ENCODE measurements at regions of chr9 and their contacts with region 1.

Region 1: DNA sequence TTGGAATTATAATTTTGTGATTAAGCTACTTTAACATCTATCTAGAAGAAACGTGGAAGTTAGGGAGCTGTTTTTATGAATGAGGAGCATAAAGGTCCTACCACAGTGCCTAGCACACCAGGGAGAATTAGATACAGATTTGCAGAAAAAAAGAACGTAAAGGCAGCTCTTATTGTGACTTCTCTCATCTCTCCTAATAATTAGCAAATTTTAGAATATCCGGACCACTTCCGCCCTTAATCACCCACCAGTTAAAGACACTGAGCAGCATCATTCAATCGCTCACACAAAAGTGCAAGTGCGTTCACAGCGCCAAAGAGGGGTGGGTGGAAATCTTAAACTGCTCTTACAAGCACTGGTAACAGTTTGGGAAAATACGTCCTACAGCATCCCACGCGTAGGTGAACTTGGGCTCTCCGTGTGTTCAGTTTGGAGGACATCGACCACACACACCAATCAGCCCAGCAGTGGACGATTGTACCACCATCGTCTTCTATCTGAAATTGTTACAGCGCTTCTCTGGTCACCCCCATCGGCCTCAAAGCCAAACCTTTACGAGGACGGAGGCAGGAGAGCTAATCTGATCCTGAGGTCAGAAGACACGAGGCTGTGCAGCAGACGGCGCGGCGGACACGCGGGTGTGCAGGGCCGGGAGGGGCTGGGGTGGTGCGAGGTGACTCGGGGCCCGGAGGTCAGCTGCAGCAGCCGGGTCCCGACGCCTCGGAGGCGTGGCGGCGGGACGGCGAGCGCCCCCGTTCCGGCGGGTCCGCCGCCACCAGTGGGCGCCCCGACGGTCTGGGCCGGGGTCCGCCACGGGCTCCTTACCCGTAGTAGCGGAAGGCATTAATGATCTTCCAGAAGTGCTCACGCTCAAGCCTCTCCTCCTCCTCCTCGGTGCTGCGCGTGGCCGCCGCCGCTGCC is 646 bp downstream of the CARNMT1 start:
- DNase-seq: peak in 8 of 10 donors; percentile 1 to 69 (median 28)
- ATAC-seq: peak; percentile 4 to 31
- H3K4me3 Mint-ChIP-seq: peak overlapping the region; percentile 88 to 98 (median 96)
- H3K27ac Mint-ChIP-seq: peak overlapping the region; percentile 83 to 98 (median 95)
- H3K4me1 Mint-ChIP-seq: peaks cover 16 to 49% (median 43%) of the 10 kb centered on the region in 4 donors
- H3K27me3 Mint-ChIP-seq: no peaks in the 10 kb centered on the region

Region 2: GRCh38 chr9:74940600-74940999 is 86.8 kb before region 1 on chr9:
- POLR2A ChIA-PET with region 1: no interaction called
- DNase-seq: no peak
- ATAC-seq: no peak
- H3K4me3 Mint-ChIP-seq: no peak overlapping the region
- H3K27ac Mint-ChIP-seq: no peak overlapping the region
- H3K4me1 Mint-ChIP-seq: peaks cover 5 to 8% (median 7%) of the 10 kb centered on the region in 4 donors
- H3K27me3 Mint-ChIP-seq: peaks cover 0 to 2% (median 0%) of the 10 kb centered on the region in 5 donors

Region 3: DNA sequence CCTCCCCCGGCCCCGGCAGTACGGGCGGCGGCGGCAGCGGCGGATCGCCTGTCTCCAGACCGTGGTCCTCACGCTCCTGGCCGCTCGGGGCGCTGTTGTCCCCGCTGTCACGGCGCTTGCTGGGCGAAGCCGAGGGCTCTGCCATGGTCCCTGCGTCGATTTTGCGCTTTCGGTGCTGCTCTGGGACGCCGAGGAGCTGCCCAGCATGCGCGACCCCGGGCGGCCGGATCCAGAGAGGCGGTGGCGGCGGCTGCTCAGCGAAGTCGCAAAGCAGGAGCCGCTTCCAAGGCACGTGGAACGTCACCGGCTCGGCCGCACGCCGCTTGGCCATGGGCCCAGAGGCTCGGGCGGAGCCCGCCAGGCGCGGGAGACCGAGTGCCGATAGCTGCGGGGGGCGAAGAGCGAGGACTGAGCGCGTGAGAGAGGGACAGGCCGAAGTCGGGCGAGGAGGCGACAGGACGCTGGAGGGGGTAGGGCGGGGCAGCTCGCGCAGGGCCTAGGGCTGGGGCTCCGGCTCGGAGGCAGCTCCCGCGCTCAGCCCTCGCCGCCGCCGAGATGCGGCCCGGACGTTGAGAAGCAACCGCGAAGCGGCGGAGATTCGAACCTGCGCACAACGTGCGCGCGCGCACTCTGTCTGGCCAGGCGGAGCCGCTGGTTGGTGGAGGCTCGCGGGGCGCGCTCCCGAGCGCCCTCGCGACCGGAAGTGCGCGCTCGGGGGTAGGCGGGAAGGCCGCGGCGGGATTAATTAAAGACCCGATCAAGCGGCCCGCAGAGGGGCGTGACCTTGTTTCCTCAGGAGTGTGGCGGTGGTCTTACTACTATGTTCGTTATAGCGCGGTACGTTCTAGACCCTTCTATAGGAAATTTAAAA is 74.9 kb before region 1 on chr9 and contains the start of gene C9orf40:
- POLR2A ChIA-PET with region 1: interaction called, 42 read pairs
- DNase-seq: peak; percentile 80 to 93 (median 88)
- ATAC-seq: peak; percentile 88 to 90
- H3K4me3 Mint-ChIP-seq: peak within 1 kb of the TSS; percentile 94 to 99 (median 98)
- H3K27ac Mint-ChIP-seq: peak within 1 kb of the TSS; percentile 91 to 98 (median 96)
- H3K4me1 Mint-ChIP-seq: peaks cover 18 to 24% (median 20%) of the 10 kb centered on the region in 4 donors
- H3K27me3 Mint-ChIP-seq: no peaks in the 10 kb centered on the region
- polyA plus RNA-seq, gene C9orf40: 1.3 to 2.6 (median 1.8) TPM

Region 4: GRCh38 chr9:75013735-75014134 is 13.7 kb before region 1 on chr9:
- POLR2A ChIA-PET with region 1: interaction called, 13 read pairs
- DNase-seq: no peak
- ATAC-seq: no peak
- H3K4me3 Mint-ChIP-seq: peak overlapping the region in 1 of 10 donors; percentile 42
- H3K27ac Mint-ChIP-seq: peak overlapping the region in 5 of 10 donors; percentile 19 to 86 (median 71)
- H3K4me1 Mint-ChIP-seq: peaks cover 12 to 36% (median 32%) of the 10 kb centered on the region in 4 donors
- H3K27me3 Mint-ChIP-seq: no peaks in the 10 kb centered on the region

Measured in naive thymus-derived CD8-positive, alpha-beta T cell (primary cell).